Thyroid gland (tissue), 4 donors: ENCODE measurements at regions of chr2 and their contacts with region 1.

Region 1: DNA sequence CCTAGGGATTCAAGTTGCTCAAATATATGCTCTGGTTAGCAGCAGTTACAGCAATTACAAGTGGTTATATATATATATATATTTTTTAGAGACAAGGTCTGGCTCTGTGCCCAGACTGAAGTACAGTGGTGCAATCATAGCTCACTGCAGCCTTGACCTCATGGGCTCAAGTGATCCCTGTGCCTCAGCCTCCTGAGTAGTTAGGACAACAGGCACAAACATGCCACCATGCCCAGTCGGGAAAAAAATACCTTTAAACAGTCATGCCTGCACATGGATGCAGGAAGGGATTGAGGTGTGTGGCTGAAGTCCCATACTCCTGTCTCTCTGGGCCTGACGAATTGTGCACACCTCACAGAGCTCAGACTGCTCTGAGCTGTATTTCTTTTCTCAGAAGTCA is 19.6 kb upstream of the DNAH7 start:
- DNase-seq: no peak
- H3K4me3 ChIP-seq: no peak overlapping the region
- H3K27ac ChIP-seq: no peak overlapping the region
- H3K4me1 ChIP-seq: no peaks in the 10 kb centered on the region
- H3K27me3 ChIP-seq: no peaks in the 10 kb centered on the region
- CTCF ChIP-seq: no peak
- POLR2A ChIP-seq: no peak

Region 2: DNA sequence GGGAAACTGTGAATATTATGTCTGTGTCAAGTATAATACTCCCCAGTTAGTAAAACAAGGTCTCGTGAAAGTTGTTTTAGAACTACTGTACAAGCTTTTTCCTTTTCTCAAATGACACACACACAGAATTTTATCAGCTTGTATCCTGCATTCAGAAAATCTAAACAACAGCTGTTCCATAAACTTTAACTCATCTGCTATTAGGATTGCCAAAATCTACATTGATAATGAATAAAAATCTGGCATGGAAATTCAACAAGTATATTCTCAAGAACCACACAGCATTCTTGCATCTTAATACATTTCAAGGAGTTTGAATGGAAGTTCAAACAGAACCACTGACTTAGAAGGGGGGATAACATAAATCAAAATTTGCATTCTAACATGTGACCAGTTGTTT is 280.0 kb before region 1 on chr2:
- intact Hi-C with region 1: no loop called
- DNase-seq: no peak
- H3K4me3 ChIP-seq: no peak overlapping the region
- H3K27ac ChIP-seq: no peak overlapping the region
- H3K4me1 ChIP-seq: no peaks in the 10 kb centered on the region
- H3K27me3 ChIP-seq: no peaks in the 10 kb centered on the region
- CTCF ChIP-seq: no peak
- POLR2A ChIP-seq: no peak

Region 3: GRCh38 chr2:196046123-196046917 is 41.9 kb before region 1 on chr2:
- intact Hi-C with region 1: no loop called
- DNase-seq: no peak
- H3K4me3 ChIP-seq: no peak overlapping the region
- H3K27ac ChIP-seq: no peak overlapping the region
- H3K4me1 ChIP-seq: no peaks in the 10 kb centered on the region
- H3K27me3 ChIP-seq: no peaks in the 10 kb centered on the region
- CTCF ChIP-seq: no peak
- POLR2A ChIP-seq: no peak

Region 4: GRCh38 chr2:196453613-196454047 is 365.4 kb after region 1 on chr2:
- intact Hi-C with region 1: loop called (anchors 10 kb)
- DNase-seq: peak; percentile 24 to 26
- H3K4me3 ChIP-seq: no peak overlapping the region
- H3K27ac ChIP-seq: no peak overlapping the region
- H3K4me1 ChIP-seq: no peaks in the 10 kb centered on the region
- H3K27me3 ChIP-seq: no peaks in the 10 kb centered on the region
- CTCF ChIP-seq: peak; percentile 11 to 61 (median 40)
- POLR2A ChIP-seq: no peak

Region 5: DNA sequence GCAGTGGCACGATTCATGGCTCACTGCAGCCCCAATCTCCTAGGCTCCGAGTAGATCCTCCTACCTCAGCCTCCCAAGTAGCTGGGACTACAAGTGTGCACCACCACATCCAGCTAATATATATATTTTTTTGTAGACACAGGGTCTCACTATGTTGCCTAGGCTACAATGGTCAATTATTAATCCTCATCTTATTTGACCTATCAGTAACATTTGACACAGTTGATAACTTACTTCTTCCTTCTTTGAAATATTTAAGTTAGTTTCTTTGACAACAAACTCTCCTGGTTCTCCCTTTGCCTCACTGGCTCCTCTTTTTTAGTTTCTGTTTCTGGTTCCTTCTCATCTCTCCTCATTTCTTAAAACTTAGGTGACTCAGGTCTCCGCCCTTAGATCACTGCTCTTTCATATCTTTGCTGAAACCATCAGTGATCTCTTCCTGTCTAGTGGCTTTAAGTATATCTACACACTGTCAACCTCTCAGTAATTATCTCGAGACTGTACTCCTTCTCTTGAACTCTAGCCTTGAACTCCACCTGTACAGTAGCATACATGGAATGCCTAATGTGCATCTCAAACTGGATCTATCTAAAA is 826.8 kb after region 1 on chr2:
- intact Hi-C with region 1: no loop called
- DNase-seq: no peak
- H3K4me3 ChIP-seq: no peak overlapping the region
- H3K27ac ChIP-seq: no peak overlapping the region
- H3K4me1 ChIP-seq: no peaks in the 10 kb centered on the region
- H3K27me3 ChIP-seq: no peaks in the 10 kb centered on the region
- CTCF ChIP-seq: no peak
- POLR2A ChIP-seq: no peak